ENCODE measurements at regions of chr11 and their contacts with region 1.

Region 1: GRCh38 chr11:59158206-59159068 is 13.5 kb upstream of the DTX4 start:
- DNase-seq: peak; percentile 80
- H3K4me3 Mint-ChIP-seq: no peak overlapping the region
- H3K27ac Mint-ChIP-seq: no peak overlapping the region
- H3K4me1 Mint-ChIP-seq: peaks cover 8% of the 10 kb centered on the region
- H3K27me3 Mint-ChIP-seq: peaks cover 11% of the 10 kb centered on the region

Region 2: GRCh38 chr11:58788355-58789023 is 369.9 kb before region 1 on chr11:
- CTCF ChIA-PET with region 1: interaction called, 7 read pairs
- intact Hi-C with region 1: loop called (anchors 5 kb)
- DNase-seq: peak; percentile 66
- H3K4me3 Mint-ChIP-seq: no peak overlapping the region
- H3K27ac Mint-ChIP-seq: no peak overlapping the region
- H3K4me1 Mint-ChIP-seq: no peaks in the 10 kb centered on the region
- H3K27me3 Mint-ChIP-seq: peaks cover 5% of the 10 kb centered on the region

Region 3: GRCh38 chr11:58813693-58814092 is 344.7 kb before region 1 on chr11:
- CTCF ChIA-PET with region 1: no interaction called
- intact Hi-C with region 1: no loop called
- DNase-seq: no peak
- H3K4me3 Mint-ChIP-seq: no peak overlapping the region
- H3K27ac Mint-ChIP-seq: no peak overlapping the region
- H3K4me1 Mint-ChIP-seq: no peaks in the 10 kb centered on the region
- H3K27me3 Mint-ChIP-seq: peaks cover 17% of the 10 kb centered on the region

Region 4: GRCh38 chr11:59053387-59053786 is 105.0 kb before region 1 on chr11:
- CTCF ChIA-PET with region 1: interaction called, 26 read pairs
- intact Hi-C with region 1: loop called (anchors 1 kb)
- DNase-seq: peak; percentile 88
- H3K4me3 Mint-ChIP-seq: no peak overlapping the region
- H3K27ac Mint-ChIP-seq: no peak overlapping the region
- H3K4me1 Mint-ChIP-seq: peaks cover 3% of the 10 kb centered on the region
- H3K27me3 Mint-ChIP-seq: peaks cover 22% of the 10 kb centered on the region

Region 5: GRCh38 chr11:59106363-59107336 is 51.8 kb before region 1 on chr11 and contains the start of gene FAM111B:
- CTCF ChIA-PET with region 1: interaction called, 9 read pairs
- intact Hi-C with region 1: loop called (anchors 1 kb)
- DNase-seq: peak; percentile 88
- H3K4me3 Mint-ChIP-seq: peak within 1 kb of the TSS; percentile 87
- H3K27ac Mint-ChIP-seq: peak within 1 kb of the TSS; percentile 76
- H3K4me1 Mint-ChIP-seq: peaks cover 41% of the 10 kb centered on the region
- H3K27me3 Mint-ChIP-seq: peaks cover 61% of the 10 kb centered on the region
- total RNA-seq, gene FAM111B: 21.6 to 22.6 TPM

Region 6: DNA sequence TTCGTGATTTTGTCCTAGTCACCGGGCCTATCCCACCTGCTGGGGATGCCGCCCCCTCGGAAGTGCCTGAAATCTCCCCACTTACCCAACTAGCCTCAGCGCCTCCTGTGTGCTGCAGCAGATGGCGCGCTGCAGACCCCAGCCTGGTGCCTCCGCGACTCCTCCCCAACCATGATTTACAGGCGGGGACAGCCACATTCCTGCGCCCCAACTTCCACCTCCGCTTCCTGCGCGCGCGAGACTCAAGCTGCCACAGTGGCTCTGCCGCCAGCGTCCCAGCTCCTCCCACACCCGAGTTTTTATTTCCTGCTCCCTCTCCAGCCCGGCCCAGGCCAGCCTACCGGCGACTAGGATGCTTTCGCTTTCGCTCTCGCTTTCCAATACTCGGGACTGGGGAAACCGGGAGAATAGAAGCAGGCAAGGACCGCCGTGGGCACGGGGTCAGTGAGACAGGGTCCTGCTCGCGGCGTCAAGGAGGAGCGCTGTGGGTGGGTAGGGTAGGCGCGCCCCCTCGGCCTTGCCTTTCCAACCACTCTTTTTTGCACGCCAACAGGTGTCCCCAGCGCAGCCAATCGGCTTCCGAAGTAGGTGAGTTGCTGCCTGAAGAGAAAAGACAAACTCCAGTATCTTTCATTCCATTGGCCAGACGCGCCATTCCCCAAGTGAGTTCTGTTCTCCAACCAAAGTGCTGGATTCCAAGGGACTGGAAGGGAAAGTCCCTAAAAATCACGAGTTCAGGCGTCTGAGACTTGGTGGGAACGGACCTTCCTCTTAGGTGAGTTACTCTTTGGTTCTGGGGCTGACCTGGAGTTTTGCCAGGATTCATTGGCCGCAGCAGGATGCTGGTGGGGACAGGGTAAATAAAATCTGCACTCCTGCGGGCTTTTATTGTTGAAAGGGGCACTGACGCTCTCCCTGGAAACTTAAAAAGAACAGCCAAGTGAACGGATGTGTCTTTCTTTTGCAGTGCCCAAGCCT is 15.6 kb before region 1 on chr11 and contains the start of gene FAM111A:
- CTCF ChIA-PET with region 1: interaction called, 46 read pairs
- intact Hi-C with region 1: loop called (anchors 1 kb)
- DNase-seq: peak; percentile 88
- H3K4me3 Mint-ChIP-seq: peak within 1 kb of the TSS; percentile 95
- H3K27ac Mint-ChIP-seq: peak within 1 kb of the TSS; percentile 91
- H3K4me1 Mint-ChIP-seq: peaks cover 40% of the 10 kb centered on the region
- H3K27me3 Mint-ChIP-seq: no peaks in the 10 kb centered on the region
- total RNA-seq, gene FAM111A: 98.3 to 99.4 TPM

Region 7: GRCh38 chr11:59186130-59186594 is 27.7 kb after region 1 on chr11:
- CTCF ChIA-PET with region 1: interaction called, 11 read pairs
- intact Hi-C with region 1: no loop called
- DNase-seq: peak; percentile 60
- H3K4me3 Mint-ChIP-seq: no peak overlapping the region
- H3K27ac Mint-ChIP-seq: no peak overlapping the region
- H3K4me1 Mint-ChIP-seq: no peaks in the 10 kb centered on the region
- H3K27me3 Mint-ChIP-seq: no peaks in the 10 kb centered on the region

Region 8: GRCh38 chr11:59918987-59919589 is 760.7 kb after region 1 on chr11:
- CTCF ChIA-PET with region 1: no interaction called
- intact Hi-C with region 1: no loop called
- DNase-seq: peak; percentile 46
- H3K4me3 Mint-ChIP-seq: no peak overlapping the region
- H3K27ac Mint-ChIP-seq: no peak overlapping the region
- H3K4me1 Mint-ChIP-seq: no peaks in the 10 kb centered on the region
- H3K27me3 Mint-ChIP-seq: peaks cover 4% of the 10 kb centered on the region

Region 9: GRCh38 chr11:60328460-60328859 is 1170.0 kb after region 1 on chr11:
- CTCF ChIA-PET with region 1: no interaction called
- intact Hi-C with region 1: no loop called
- DNase-seq: no peak
- H3K4me3 Mint-ChIP-seq: no peak overlapping the region
- H3K27ac Mint-ChIP-seq: no peak overlapping the region
- H3K4me1 Mint-ChIP-seq: no peaks in the 10 kb centered on the region
- H3K27me3 Mint-ChIP-seq: peaks cover 5% of the 10 kb centered on the region

Measured in activated naive CD4-positive, alpha-beta T cell treated with anti-CD3 and anti-CD28 coated beads for 36 hours (primary cell).